ENCODE measurements at regions of chr10 and their contacts with region 1.

Region 1: GRCh38 chr10:99612167-99612831 is 7.9 kb downstream of the SLC25A28 start:
- DNase-seq: peak; percentile 26
- ATAC-seq: peak; percentile 63
- H3K4me3 Mint-ChIP-seq: no peak overlapping the region
- H3K27ac Mint-ChIP-seq: peak overlapping the region; percentile 9
- H3K4me1 Mint-ChIP-seq: peaks cover 30% of the 10 kb centered on the region
- H3K27me3 Mint-ChIP-seq: no peaks in the 10 kb centered on the region
- CTCF ChIP-seq: peak; percentile 85

Region 2: GRCh38 chr10:98446661-98447221 is 1165.6 kb before region 1 on chr10 and contains the start of gene HPS1:
- CTCF ChIA-PET with region 1: no interaction called
- POLR2A ChIA-PET with region 1: no interaction called
- intact Hi-C with region 1: no loop called
- DNase-seq: peak; percentile 87
- ATAC-seq: peak; percentile 94
- H3K4me3 Mint-ChIP-seq: peak within 1 kb of the TSS; percentile 94
- H3K27ac Mint-ChIP-seq: peak within 1 kb of the TSS; percentile 91
- H3K4me1 Mint-ChIP-seq: peaks cover 32% of the 10 kb centered on the region
- H3K27me3 Mint-ChIP-seq: peaks cover 5% of the 10 kb centered on the region
- CTCF ChIP-seq: no peak
- total RNA-seq, gene HPS1: 51.9 to 52.1 TPM

Region 3: GRCh38 chr10:99395750-99396445 is 216.4 kb before region 1 on chr10:
- CTCF ChIA-PET with region 1: interaction called, 22 read pairs
- POLR2A ChIA-PET with region 1: no interaction called
- intact Hi-C with region 1: loop called (anchors 5 kb)
- DNase-seq: no peak
- ATAC-seq: no peak
- H3K4me3 Mint-ChIP-seq: no peak overlapping the region
- H3K27ac Mint-ChIP-seq: no peak overlapping the region
- H3K4me1 Mint-ChIP-seq: peaks cover 4% of the 10 kb centered on the region
- H3K27me3 Mint-ChIP-seq: no peaks in the 10 kb centered on the region
- CTCF ChIP-seq: no peak

Region 4: DNA sequence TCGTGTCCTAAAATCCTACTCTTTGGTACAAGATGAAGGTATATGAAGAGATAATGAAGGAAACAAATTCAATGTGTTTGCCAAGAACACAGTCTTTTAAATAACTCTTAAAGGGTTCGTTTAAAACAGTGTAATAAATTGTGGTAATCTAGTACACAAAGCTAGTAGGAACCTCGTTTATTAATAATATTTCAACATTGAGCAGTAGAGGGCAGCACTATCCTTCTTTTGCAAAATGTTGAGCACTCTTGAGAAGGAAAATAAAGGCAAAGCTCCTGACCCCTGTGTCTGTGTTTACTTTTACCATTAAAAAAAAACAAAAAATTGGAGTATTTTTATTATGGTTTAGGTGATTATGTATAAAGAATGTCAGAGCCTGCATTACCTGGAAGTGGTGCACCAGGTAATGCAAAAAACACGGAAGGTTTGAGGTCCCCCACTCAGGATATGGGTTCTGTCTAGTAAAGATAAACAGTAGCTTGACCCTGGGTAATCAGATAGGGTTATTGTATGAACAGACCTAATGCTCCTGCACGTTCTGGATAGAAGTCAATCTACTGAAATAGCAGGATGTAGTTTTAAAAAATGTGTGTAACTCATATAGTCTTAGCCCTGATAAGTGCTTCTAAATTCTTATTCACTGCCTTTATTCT is 176.2 kb before region 1 on chr10:
- CTCF ChIA-PET with region 1: interaction called, 46 read pairs
- POLR2A ChIA-PET with region 1: interaction called, 10 read pairs
- intact Hi-C with region 1: no loop called
- DNase-seq: no peak
- ATAC-seq: no peak
- H3K4me3 Mint-ChIP-seq: no peak overlapping the region
- H3K27ac Mint-ChIP-seq: no peak overlapping the region
- H3K4me1 Mint-ChIP-seq: peaks cover 17% of the 10 kb centered on the region
- H3K27me3 Mint-ChIP-seq: no peaks in the 10 kb centered on the region
- CTCF ChIP-seq: peak; percentile 72

Region 5: GRCh38 chr10:99598781-99599509 is 13.4 kb before region 1 on chr10:
- CTCF ChIA-PET with region 1: interaction called, 11 read pairs
- POLR2A ChIA-PET with region 1: no interaction called
- intact Hi-C with region 1: no loop called
- DNase-seq: no peak
- ATAC-seq: no peak
- H3K4me3 Mint-ChIP-seq: no peak overlapping the region
- H3K27ac Mint-ChIP-seq: no peak overlapping the region
- H3K4me1 Mint-ChIP-seq: no peaks in the 10 kb centered on the region
- H3K27me3 Mint-ChIP-seq: peaks cover 5% of the 10 kb centered on the region
- CTCF ChIP-seq: no peak

Region 6: GRCh38 chr10:99732033-99732912 is 120.0 kb after region 1 on chr10 and contains the starts of genes COX15 and CUTC:
- CTCF ChIA-PET with region 1: interaction called, 3 read pairs
- POLR2A ChIA-PET with region 1: interaction called, 11 read pairs
- intact Hi-C with region 1: no loop called
- DNase-seq: peak; percentile 96
- ATAC-seq: peak; percentile 93
- H3K4me3 Mint-ChIP-seq: peak within 1 kb of the TSS; percentile 99
- H3K27ac Mint-ChIP-seq: peak within 1 kb of the TSS; percentile 100
- H3K4me1 Mint-ChIP-seq: peaks cover 33% of the 10 kb centered on the region
- H3K27me3 Mint-ChIP-seq: no peaks in the 10 kb centered on the region
- CTCF ChIP-seq: peak; percentile 48
- total RNA-seq, gene COX15: 34.2 to 35.3 TPM
- total RNA-seq, gene CUTC: 37.4 to 38.1 TPM